ENCODE measurements at regions of chr5 and their contacts with region 1.

Region 1: DNA sequence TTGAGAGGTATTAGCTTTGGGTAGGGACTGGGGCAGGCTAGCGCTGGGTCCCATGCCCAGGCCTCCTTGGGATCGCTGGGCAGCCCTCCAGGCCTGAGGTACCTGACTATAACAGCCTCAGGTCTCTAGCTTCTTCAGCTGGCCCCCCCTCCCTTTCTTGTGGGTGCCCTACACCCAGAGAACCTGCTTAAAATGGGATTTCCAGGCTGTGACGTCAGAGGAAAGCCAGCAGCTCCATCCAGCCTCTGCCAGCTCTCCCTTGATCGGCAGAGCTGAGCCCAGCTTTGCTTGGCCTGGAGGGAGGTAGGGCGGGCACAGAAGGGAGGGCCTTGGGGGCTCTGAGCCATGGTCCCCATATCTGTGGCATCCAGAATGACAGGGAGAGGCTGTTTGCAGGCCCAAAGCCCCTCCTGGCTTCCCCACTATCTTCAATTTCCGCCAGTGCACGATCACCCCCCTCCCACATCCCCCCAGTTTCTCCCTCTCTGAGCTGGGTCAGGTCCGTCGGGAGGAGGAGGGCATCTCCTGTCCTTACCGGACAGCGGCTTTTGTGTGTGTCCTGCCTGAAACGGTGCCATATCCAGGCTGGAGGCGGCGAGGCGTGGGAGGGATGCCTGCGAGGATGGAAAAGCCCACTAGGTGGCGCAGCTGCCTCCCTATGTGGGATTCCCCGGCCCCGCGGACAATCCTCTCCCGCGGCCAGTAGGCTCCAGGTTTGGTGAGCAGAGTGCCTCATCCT is 10.8 kb downstream of the REEP2 start:
- DNase-seq: peak; percentile 48 to 84 (median 78)
- ATAC-seq: peak; percentile 92
- H3K4me3 ChIP-seq: no peak overlapping the region
- H3K4me3 Mint-ChIP-seq: peak overlapping the region; percentile 15
- H3K27ac ChIP-seq: no peak overlapping the region
- H3K27ac Mint-ChIP-seq: no peak overlapping the region
- H3K4me1 ChIP-seq: peaks cover 7% of the 10 kb centered on the region
- H3K4me1 Mint-ChIP-seq: peaks cover 5% of the 10 kb centered on the region
- H3K27me3 ChIP-seq: no peaks in the 10 kb centered on the region
- H3K27me3 Mint-ChIP-seq: no peaks in the 10 kb centered on the region
- CTCF ChIP-seq: peak; percentile 96

Region 2: DNA sequence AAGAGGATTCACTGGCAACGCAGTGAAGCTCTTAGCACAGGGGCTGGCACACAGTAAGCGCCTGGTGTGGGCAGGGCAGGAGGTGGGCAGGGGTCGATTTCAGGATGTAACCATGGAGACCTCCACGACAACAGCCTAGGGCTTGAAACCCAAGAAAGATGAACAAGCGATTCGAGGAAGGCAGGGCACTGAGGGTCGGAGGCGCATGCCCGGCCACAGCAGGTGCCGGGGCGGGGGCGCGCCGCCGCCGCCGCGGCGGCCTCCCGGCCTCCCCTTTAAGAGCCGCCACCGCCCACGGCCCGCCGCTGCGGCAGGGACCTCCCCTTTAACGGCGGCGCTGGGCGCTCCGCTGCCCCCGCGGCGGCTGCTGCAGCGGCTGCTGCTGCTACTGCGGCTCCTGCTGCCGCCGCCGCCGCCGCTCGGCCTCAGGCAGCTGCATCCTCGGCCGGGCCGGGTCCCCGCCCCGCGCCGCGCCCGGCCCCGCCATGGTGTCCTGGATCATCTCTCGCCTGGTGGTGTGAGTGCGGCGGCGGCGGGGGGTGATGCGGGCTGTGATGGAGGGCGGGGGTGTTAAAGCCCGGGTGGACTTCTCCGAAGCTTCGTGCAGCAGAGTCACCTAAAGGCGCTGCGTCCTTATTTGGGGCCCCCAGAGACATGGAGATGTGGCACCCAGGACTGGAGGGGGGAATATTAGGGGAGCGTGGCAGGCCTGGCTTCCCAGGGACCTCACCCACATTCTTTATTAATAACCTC is 10.8 kb before region 1 on chr5 and contains the start of gene REEP2:
- CTCF ChIA-PET with region 1: interaction called, 25 read pairs
- POLR2A ChIA-PET with region 1: no interaction called
- intact Hi-C with region 1: no loop called
- DNase-seq: peak; percentile 12 to 80 (median 61)
- ATAC-seq: peak; percentile 90
- H3K4me3 ChIP-seq: peak within 1 kb of the TSS; percentile 34 to 43
- H3K4me3 Mint-ChIP-seq: peak within 1 kb of the TSS; percentile 83
- H3K27ac ChIP-seq: no peak within 1 kb of the TSS
- H3K27ac Mint-ChIP-seq: no peak within 1 kb of the TSS
- H3K4me1 ChIP-seq: peaks cover 13% of the 10 kb centered on the region
- H3K4me1 Mint-ChIP-seq: peaks cover 17% of the 10 kb centered on the region
- H3K27me3 ChIP-seq: no peaks in the 10 kb centered on the region
- H3K27me3 Mint-ChIP-seq: no peaks in the 10 kb centered on the region
- CTCF ChIP-seq: no peak
- total RNA-seq, gene REEP2: 0.19 TPM in 1 of 2 experiments, not detected in the other

Region 3: DNA sequence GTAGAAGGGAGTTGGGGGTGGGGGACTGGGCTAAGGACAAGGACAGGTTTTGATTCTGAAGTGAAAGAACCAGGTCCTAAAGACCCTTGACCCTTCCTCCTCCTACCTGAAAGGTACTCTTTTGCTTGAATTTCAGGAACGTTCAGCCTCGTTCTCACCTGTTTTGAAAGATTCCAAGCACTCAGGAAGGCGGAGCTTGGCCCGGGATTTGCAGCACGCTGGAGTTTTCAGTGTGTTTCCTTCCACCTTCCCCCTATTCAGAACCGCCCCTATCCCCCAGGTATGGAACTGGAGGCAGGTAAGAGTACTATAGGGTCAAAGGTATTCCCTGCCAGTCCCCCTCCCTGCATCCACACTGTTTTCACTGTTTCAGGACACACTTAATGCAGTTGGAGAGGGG is 22.7 kb after region 1 on chr5:
- CTCF ChIA-PET with region 1: interaction called, 100 read pairs
- POLR2A ChIA-PET with region 1: no interaction called
- intact Hi-C with region 1: no loop called
- DNase-seq: no peak
- ATAC-seq: no peak
- H3K4me3 ChIP-seq: no peak overlapping the region
- H3K4me3 Mint-ChIP-seq: no peak overlapping the region
- H3K27ac ChIP-seq: no peak overlapping the region
- H3K27ac Mint-ChIP-seq: no peak overlapping the region
- H3K4me1 ChIP-seq: peaks cover 5% of the 10 kb centered on the region
- H3K4me1 Mint-ChIP-seq: peaks cover 13% of the 10 kb centered on the region
- H3K27me3 ChIP-seq: no peaks in the 10 kb centered on the region
- H3K27me3 Mint-ChIP-seq: peaks cover 4% of the 10 kb centered on the region
- CTCF ChIP-seq: no peak

Region 4: GRCh38 chr5:138503487-138504270 is 54.0 kb after region 1 on chr5:
- CTCF ChIA-PET with region 1: interaction called, 291 read pairs
- POLR2A ChIA-PET with region 1: interaction called, 3 read pairs
- intact Hi-C with region 1: loop called (anchors 1 kb)
- DNase-seq: peak in 5 of 9 experiments; percentile 2 to 79 (median 36)
- ATAC-seq: peak; percentile 79
- H3K4me3 ChIP-seq: no peak overlapping the region
- H3K4me3 Mint-ChIP-seq: no peak overlapping the region
- H3K27ac ChIP-seq: no peak overlapping the region
- H3K27ac Mint-ChIP-seq: no peak overlapping the region
- H3K4me1 ChIP-seq: no peaks in the 10 kb centered on the region
- H3K4me1 Mint-ChIP-seq: peaks cover 2% of the 10 kb centered on the region
- H3K27me3 ChIP-seq: no peaks in the 10 kb centered on the region
- H3K27me3 Mint-ChIP-seq: no peaks in the 10 kb centered on the region
- CTCF ChIP-seq: peak; percentile 72

Region 5: GRCh38 chr5:138528208-138528607 is 78.5 kb after region 1 on chr5:
- CTCF ChIA-PET with region 1: interaction called, 14 read pairs
- POLR2A ChIA-PET with region 1: no interaction called
- intact Hi-C with region 1: no loop called
- DNase-seq: no peak
- ATAC-seq: no peak
- H3K4me3 ChIP-seq: no peak overlapping the region
- H3K4me3 Mint-ChIP-seq: no peak overlapping the region
- H3K27ac ChIP-seq: no peak overlapping the region
- H3K27ac Mint-ChIP-seq: no peak overlapping the region
- H3K4me1 ChIP-seq: peaks cover 11% of the 10 kb centered on the region
- H3K4me1 Mint-ChIP-seq: peaks cover 56% of the 10 kb centered on the region
- H3K27me3 ChIP-seq: no peaks in the 10 kb centered on the region
- H3K27me3 Mint-ChIP-seq: no peaks in the 10 kb centered on the region
- CTCF ChIP-seq: no peak